ENCODE measurements at regions of chr13 and their contacts with region 1.

Region 1: GRCh38 chr13:44322928-44323327 is 50.7 kb upstream of the SERP2 start:
- DNase-seq: no peak
- H3K4me3 ChIP-seq: no peak overlapping the region
- CTCF ChIP-seq: no peak

Region 2: DNA sequence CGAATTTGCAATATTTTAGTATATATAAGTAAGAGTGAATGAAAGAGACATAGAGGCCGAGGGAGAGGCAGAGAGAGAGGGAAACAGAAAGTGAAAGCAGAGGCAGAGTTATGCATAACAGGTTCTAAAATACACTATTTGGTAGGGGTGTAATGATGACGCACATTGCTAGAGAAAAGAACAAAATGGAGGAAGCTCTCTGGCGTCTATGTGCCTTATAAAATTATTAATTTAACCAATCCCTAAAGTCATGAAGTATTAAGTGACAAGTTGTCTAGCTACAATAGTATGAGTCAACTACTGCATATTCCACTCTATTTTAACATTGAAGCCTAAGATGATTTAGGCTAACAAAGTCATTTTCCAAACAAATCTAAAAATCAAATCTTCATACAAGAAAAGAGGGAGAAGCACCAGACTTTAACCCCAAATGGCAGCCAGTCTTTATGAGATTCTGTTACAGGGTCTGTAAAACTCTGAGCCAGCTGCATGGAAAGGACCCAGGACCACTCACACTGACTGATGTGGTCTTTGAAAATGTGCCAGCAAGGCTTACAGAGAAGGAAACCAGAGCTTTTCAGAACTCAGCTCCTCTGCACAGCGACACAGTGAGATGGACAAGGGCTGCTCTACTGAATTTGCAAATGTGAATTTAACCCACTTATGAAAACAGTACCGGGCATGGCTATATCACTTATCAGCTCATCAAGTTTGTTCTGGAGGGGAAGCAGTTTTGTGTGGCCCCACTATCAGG is 48.3 kb before region 1 on chr13:
- in situ Hi-C with region 1: loop called (anchors 5 kb)
- DNase-seq: no peak
- H3K4me3 ChIP-seq: no peak overlapping the region
- CTCF ChIP-seq: no peak

Region 3: DNA sequence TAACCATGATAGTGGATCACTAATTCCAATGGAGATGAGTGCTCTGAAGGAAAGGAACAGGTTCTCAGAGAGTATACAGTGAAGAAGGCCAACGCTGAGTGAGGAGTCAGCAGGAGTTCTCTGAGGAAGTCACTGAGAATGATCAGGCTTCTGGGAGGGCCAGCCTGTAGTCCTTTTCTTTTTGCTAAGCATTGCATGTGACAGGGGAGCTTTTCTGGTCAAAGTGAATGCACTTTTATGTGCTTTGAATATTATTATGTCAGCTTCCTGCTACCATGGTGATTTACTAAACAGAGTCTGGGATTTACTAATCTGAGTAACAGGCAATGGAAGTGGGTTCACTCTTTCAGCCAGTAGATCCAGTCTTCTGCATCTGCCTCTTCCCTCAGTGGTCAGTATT is 30.4 kb before region 1 on chr13:
- in situ Hi-C with region 1: no loop called
- DNase-seq: no peak
- H3K4me3 ChIP-seq: no peak overlapping the region
- CTCF ChIP-seq: no peak

Region 4: GRCh38 chr13:44373601-44374348 is 50.8 kb after region 1 on chr13 and contains the start of gene SERP2:
- in situ Hi-C with region 1: loop called (anchors 5 kb)
- DNase-seq: no peak
- H3K4me3 ChIP-seq: peak within 1 kb of the TSS; percentile 47
- CTCF ChIP-seq: no peak

Measured in astrocyte of the cerebellum (primary cell).